AG04450 (cell line): ENCODE measurements at regions of chr17 and their contacts with region 1.

Region 1: DNA sequence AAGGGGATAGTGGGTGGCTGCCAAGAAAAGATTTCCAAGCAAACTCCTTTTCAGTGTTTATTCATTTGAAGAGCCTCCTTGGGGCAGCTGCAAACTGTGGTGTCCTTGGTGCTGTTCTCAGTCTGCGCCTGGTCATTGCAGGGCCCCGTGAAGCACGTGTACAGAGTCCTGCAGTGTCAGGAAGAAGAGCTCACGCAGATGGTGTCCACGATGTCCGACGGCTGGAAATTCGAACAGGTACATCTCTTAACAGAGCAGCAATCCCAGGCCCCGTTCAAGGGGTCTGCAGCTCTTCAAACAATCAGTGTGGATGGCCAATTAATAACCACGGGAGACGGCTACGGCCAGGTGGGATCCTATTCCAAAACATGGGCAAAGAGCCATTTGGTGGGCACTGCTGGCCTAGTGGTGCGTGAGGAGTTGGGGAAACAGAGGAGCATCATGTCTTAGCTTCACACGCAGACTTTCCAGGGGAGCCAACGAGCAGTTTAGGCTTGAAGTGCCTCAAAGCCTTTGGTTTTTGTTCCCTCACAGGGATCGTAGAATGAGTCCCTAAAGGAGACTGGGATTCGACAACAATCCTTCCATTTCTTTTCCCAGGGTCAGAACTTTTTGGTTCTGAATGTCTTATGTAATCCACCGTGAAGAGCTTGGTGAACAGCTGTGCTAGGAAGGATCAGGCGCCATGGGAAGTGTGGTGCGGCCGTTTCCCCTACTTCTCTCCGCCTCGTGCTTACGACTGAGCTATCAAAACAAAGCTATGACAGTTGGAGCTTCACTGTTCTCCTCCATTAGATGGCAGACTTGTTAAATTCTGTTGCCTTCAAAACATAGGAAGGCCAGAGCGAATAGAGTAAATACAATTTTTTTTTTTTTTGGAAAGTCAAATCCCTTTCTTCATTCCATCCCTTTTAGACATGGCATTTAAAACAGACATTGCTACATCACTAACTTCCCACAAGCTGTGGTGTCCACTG is 12.6 kb downstream of the KCTD2 start:
- DNase-seq: peak; percentile 54
- H3K4me3 ChIP-seq: no peak overlapping the region
- H3K27ac ChIP-seq: no peak overlapping the region
- H3K27me3 ChIP-seq: no peaks in the 10 kb centered on the region
- CTCF ChIP-seq: peak; percentile 65

Region 2: DNA sequence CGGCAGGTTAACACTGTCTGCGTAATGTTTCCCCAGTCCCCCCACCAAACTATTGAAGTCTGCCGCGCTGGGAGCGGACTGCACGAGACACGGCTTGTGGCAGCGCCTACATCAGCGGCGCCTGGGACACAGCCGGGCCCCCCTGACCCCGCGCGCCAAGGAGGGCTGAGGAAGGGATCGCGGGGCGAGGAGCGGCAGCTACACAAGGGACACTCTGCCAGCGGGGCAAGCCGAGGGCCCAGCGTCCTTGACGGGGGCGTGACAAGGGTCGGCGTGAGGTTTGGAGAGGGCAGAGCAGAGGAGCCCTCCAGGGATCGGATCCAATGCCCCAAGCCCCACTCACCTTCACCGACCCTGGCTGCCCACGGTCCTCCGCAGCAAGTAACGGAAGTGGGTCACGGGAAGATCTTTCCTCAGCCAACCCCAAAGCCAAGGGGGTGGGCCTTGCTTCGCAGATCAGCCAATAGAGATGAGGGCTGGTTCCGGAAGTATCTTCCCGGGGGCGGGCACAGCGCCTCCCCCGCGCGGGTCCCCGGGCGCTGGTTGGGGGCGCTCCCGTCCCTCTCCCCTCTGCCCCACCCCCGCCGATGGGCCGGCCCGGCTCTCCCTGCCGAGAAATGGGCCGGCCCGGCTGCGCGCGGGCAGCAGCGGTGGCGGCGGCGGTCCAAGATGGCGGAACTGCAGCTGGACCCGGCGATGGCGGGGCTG is 12.9 kb before region 1 on chr17 and contains the starts of genes ATP5PD and KCTD2:
- CTCF ChIA-PET with region 1: interaction called, 15 read pairs
- POLR2A ChIA-PET with region 1: no interaction called
- DNase-seq: peak; percentile 90
- H3K4me3 ChIP-seq: peak within 1 kb of the TSS; percentile 98
- H3K27ac ChIP-seq: peak within 1 kb of the TSS; percentile 97
- H3K27me3 ChIP-seq: no peaks in the 10 kb centered on the region
- CTCF ChIP-seq: no peak
- polyA plus RNA-seq, gene ATP5PD: 281 and 292 TPM in 2 replicates
- polyA plus RNA-seq, gene KCTD2: 29.8 and 36.0 TPM in 2 replicates

Region 3: DNA sequence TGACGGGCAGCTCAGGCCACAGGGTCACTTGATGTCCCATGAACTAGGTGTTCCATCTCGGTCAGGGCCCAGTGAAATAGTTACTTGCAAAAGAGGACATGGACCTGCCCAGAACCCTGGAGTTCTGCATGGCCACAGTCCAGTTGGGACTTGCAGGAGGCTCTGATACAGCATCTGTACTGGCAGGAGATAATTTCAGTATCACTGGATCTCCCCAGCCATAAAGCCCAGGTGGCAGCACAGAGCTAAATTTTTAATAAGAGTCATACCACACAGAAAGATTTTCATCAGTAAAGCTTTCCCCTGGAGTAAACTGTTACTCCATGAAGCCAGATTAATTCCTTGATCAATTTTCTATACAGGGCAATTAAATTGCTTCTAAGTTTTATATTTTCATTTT is 10.1 kb after region 1 on chr17:
- CTCF ChIA-PET with region 1: interaction called, 15 read pairs
- POLR2A ChIA-PET with region 1: no interaction called
- DNase-seq: no peak
- H3K4me3 ChIP-seq: no peak overlapping the region
- H3K27ac ChIP-seq: no peak overlapping the region
- H3K27me3 ChIP-seq: no peaks in the 10 kb centered on the region
- CTCF ChIP-seq: peak; percentile 47

Region 4: DNA sequence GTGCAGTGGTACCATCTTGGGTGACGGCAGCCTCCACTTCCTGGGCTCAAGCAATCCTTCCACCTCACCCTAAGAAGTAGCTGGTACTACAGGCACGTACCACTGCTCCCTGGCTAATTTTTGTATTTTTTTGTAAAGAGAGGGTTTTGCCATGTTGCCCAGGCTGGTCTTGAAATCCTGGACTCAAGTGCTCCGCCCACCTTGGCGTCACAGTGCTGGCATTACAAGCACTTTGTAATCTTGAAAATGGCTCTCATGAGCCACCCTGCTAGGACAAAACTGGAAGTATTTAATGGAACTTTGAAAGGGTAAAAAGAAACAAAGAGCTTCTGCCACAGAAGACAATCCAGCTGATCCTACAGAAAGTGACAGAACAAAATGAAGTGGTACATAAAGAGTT is 113.9 kb after region 1 on chr17:
- CTCF ChIA-PET with region 1: interaction called, 32 read pairs
- POLR2A ChIA-PET with region 1: no interaction called
- DNase-seq: no peak
- H3K4me3 ChIP-seq: no peak overlapping the region
- H3K27ac ChIP-seq: no peak overlapping the region
- H3K27me3 ChIP-seq: no peaks in the 10 kb centered on the region
- CTCF ChIP-seq: no peak

Region 5: GRCh38 chr17:75199886-75200618 is 140.4 kb after region 1 on chr17:
- CTCF ChIA-PET with region 1: interaction called, 61 read pairs
- POLR2A ChIA-PET with region 1: no interaction called
- DNase-seq: no peak
- H3K4me3 ChIP-seq: no peak overlapping the region
- H3K27ac ChIP-seq: no peak overlapping the region
- H3K27me3 ChIP-seq: no peaks in the 10 kb centered on the region
- CTCF ChIP-seq: no peak

Region 6: GRCh38 chr17:75205037-75205792 is 145.6 kb after region 1 on chr17 and contains the start of gene NUP85:
- CTCF ChIA-PET with region 1: interaction called, 61 read pairs
- POLR2A ChIA-PET with region 1: no interaction called
- DNase-seq: peak; percentile 79
- H3K4me3 ChIP-seq: peak within 1 kb of the TSS; percentile 100
- H3K27ac ChIP-seq: peak within 1 kb of the TSS; percentile 99
- H3K27me3 ChIP-seq: no peaks in the 10 kb centered on the region
- CTCF ChIP-seq: no peak
- polyA plus RNA-seq, gene NUP85: 31.5 and 33.3 TPM in 2 replicates

Region 7: DNA sequence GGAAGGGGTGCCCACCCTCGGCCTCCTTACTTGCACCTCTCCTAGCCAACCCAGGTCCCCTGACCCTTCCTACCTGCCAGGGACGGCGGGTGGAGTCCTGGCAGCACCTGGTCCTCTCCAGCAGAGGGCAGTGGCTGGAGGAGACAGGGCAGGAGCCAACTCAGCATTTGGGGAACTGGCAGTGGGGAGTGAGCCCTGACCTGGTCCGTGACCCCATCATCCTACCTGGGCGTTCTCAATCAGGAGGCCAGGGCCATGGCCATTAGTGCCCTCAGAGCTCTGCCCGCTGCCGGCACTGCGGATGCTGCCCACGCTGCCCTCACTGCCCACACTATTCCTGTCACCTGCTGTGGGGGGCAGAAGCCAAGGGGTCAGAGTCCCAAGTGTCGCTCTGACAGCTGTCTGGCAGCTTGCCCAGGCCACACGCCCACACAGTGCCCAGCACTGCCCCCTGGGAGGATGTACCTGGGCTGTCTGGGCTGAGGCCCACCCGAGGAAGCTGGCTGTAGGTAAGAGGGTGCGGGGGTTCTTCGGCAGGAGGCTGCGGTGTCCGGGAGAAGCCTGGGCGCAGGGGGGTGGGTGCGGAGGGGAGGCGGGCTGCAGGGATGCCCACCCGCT is 444.8 kb after region 1 on chr17:
- CTCF ChIA-PET with region 1: no interaction called
- POLR2A ChIA-PET with region 1: no interaction called
- DNase-seq: no peak
- H3K4me3 ChIP-seq: no peak overlapping the region
- H3K27ac ChIP-seq: no peak overlapping the region
- H3K27me3 ChIP-seq: no peaks in the 10 kb centered on the region
- CTCF ChIP-seq: peak; percentile 52